GM10248 (cell line): ENCODE measurements at regions of chr13 and their contacts with region 1.

Region 1: DNA sequence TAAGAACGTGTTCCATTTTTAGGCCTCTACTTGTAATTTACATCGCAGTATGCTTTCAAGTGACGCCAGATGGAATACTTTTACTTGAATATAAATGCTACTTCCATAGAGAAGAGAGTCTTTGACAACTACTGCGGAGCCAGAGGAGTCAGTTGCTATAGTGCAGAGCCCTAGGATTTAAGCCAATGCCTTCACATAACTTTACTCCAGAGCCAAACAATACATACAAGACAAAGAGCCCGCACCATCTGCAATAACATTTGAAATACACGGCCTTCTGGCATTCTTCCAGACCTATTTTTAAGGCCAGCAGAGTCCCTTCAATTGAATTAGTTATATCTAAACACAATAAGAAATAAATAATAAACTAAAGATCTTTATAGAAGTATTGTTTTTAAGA is 59.4 kb downstream of the XPO4 start:
- DNase-seq: no peak
- CTCF ChIP-seq: no peak

Region 2: DNA sequence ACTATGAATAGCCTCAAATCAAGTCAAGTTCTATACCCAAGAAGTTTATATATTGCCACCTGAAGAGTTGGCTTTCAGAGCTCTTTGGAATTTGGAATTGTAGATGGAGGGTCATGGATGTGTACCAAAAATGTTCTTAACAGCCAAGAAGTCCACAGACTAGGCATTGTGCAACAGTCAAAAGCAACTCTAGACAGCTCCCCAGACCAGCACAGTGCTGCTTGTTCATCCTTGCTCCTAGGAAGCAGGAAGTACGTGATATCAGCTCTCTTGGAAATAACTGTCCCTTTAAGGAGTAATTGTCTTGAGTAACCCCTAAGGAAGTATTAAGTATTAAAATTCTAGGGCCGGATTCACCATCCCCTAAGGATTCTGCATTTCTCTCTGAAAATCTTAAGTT is 170.4 kb before region 1 on chr13:
- CTCF ChIA-PET with region 1: no interaction called
- POLR2A ChIA-PET with region 1: no interaction called
- DNase-seq: no peak
- CTCF ChIP-seq: no peak

Region 3: DNA sequence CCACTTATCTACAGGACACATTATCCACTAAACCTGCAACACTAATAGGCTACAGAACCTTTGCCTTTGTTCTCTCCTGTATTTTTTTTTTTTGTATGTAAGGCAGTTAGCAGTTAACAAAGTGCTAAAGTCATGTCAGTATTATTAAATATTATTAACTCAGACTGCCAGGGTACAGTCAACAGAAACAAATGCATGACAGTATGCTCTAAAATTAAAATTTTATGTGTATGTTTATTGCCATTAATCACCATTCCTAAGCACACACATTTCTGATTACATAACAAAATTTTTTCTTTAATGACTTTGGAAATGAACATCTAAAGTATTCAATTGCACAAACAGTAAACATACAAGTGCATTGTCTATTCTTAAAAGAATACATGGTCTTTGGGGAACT is 17.7 kb after region 1 on chr13:
- CTCF ChIA-PET with region 1: interaction called, 17 read pairs
- POLR2A ChIA-PET with region 1: interaction called, 3 read pairs
- DNase-seq: no peak
- CTCF ChIP-seq: no peak